ENCODE measurements at regions of chr6 and their contacts with region 1.

Region 1: DNA sequence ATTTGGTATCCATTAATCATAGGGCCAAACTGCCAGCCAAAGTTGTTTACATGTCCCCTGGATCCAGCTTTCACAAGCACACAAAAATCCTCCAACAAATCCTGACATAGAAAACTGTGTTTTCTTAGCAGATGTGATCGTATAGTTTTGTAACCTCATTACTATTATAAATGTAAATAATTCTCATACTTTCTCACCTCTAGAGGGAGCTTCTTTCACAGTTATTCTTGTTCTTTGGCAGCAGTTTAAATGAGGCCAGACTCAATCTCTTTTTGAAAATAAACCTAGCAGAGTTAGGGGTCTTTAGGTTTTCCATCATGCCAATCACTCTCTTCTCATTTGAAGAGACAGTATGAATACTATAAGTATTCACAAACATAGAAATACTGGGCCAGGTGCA is 17.0 kb upstream of the ZNF318 start:
- DNase-seq: no peak
- H3K4me3 ChIP-seq: no peak overlapping the region
- H3K27ac ChIP-seq: no peak overlapping the region
- H3K4me1 ChIP-seq: peaks cover 12% of the 10 kb centered on the region
- H3K27me3 ChIP-seq: no peaks in the 10 kb centered on the region
- CTCF ChIP-seq: peak in 1 of 2 donors; percentile 16

Region 2: DNA sequence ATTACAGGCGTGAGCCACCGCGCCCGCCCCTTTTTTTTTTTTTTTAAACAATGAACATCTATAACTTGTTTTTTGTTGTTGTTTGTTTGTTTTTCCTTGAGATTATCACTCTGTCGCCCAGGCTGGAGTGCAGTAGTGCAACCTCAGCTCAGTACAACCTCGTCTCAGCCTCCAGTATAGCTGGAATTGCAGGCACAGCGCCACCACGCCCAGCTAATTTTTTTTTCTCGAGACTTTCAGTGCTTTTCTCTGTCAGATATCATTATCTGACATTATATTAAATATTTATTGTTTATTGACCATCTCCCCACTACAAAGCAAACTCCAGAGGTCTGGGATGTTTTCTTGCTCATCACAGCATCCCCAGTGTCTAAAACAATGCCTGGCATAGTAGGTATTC is 71.2 kb after region 1 on chr6:
- CTCF ChIA-PET with region 1: no interaction called
- dilution Hi-C with region 1: no loop called
- in situ Hi-C with region 1: no loop called
- intact Hi-C with region 1: no loop called
- DNase-seq: no peak
- H3K4me3 ChIP-seq: no peak overlapping the region
- H3K27ac ChIP-seq: no peak overlapping the region
- H3K4me1 ChIP-seq: peaks cover 6% of the 10 kb centered on the region
- H3K27me3 ChIP-seq: no peaks in the 10 kb centered on the region
- CTCF ChIP-seq: no peak

Region 3: GRCh38 chr6:43532201-43532600 is 145.7 kb after region 1 on chr6:
- CTCF ChIA-PET with region 1: interaction called, 14 read pairs
- dilution Hi-C with region 1: no loop called
- in situ Hi-C with region 1: no loop called
- intact Hi-C with region 1: no loop called
- DNase-seq: no peak
- H3K4me3 ChIP-seq: no peak overlapping the region
- H3K27ac ChIP-seq: no peak overlapping the region
- H3K4me1 ChIP-seq: no peaks in the 10 kb centered on the region
- H3K27me3 ChIP-seq: no peaks in the 10 kb centered on the region
- CTCF ChIP-seq: no peak